ENCODE measurements at regions of chr2 and their contacts with region 1.

Region 1: GRCh38 chr2:24360050-24360962 is at the start of gene ITSN2:
- DNase-seq: peak; percentile 81 to 88
- H3K4me3 ChIP-seq: peak within 1 kb of the TSS; percentile 90
- H3K4me3 Mint-ChIP-seq: peak within 1 kb of the TSS; percentile 78
- H3K27ac Mint-ChIP-seq: peak within 1 kb of the TSS; percentile 68
- H3K4me1 ChIP-seq: peaks cover 41% of the 10 kb centered on the region
- H3K4me1 Mint-ChIP-seq: peaks cover 33% of the 10 kb centered on the region
- H3K27me3 ChIP-seq: no peaks in the 10 kb centered on the region
- H3K27me3 Mint-ChIP-seq: no peaks in the 10 kb centered on the region
- CTCF ChIP-seq: no peak
- total RNA-seq, gene ITSN2: 42.8 and 49.4 TPM in 2 replicates

Region 2: GRCh38 chr2:24111407-24111901 is 248.9 kb before region 1 on chr2:
- CTCF ChIA-PET with region 1: no interaction called
- POLR2A ChIA-PET with region 1: no interaction called
- intact Hi-C with region 1: no loop called
- DNase-seq: peak in 1 of 2 experiments; percentile 13
- H3K4me3 ChIP-seq: no peak overlapping the region
- H3K4me3 Mint-ChIP-seq: no peak overlapping the region
- H3K27ac Mint-ChIP-seq: peak overlapping the region; percentile 73
- H3K4me1 ChIP-seq: peaks cover 21% of the 10 kb centered on the region
- H3K4me1 Mint-ChIP-seq: peaks cover 23% of the 10 kb centered on the region
- H3K27me3 ChIP-seq: no peaks in the 10 kb centered on the region
- H3K27me3 Mint-ChIP-seq: no peaks in the 10 kb centered on the region
- CTCF ChIP-seq: no peak

Region 3: GRCh38 chr2:24228470-24228869 is 131.8 kb before region 1 on chr2:
- CTCF ChIA-PET with region 1: no interaction called
- POLR2A ChIA-PET with region 1: no interaction called
- intact Hi-C with region 1: loop called (anchors 5 kb)
- DNase-seq: peak in 1 of 2 experiments; percentile 17
- H3K4me3 ChIP-seq: no peak overlapping the region
- H3K4me3 Mint-ChIP-seq: no peak overlapping the region
- H3K27ac Mint-ChIP-seq: no peak overlapping the region
- H3K4me1 ChIP-seq: no peaks in the 10 kb centered on the region
- H3K4me1 Mint-ChIP-seq: no peaks in the 10 kb centered on the region
- H3K27me3 ChIP-seq: no peaks in the 10 kb centered on the region
- H3K27me3 Mint-ChIP-seq: no peaks in the 10 kb centered on the region
- CTCF ChIP-seq: peak; percentile 46 to 50